Activated naive CD8-positive, alpha-beta T cell treated with anti-CD3 and anti-CD28 coated beads, Interleukin-2, amount 10 ng/mL, durations not matched to agents 7 days and 5 days (primary cell): ENCODE measurements at regions of chr5 and their contacts with region 1.

Region 1: GRCh38 chr5:134176511-134177368 is at the start of gene SKP1:
- DNase-seq: peak; percentile 94
- ATAC-seq: peak; percentile 81
- H3K4me3 Mint-ChIP-seq: peak within 1 kb of the TSS; percentile 98
- H3K27ac Mint-ChIP-seq: peak within 1 kb of the TSS; percentile 94
- H3K4me1 Mint-ChIP-seq: peaks cover 15% of the 10 kb centered on the region
- H3K27me3 Mint-ChIP-seq: no peaks in the 10 kb centered on the region
- total RNA-seq, gene SKP1: 193 to 206 TPM

Region 2: GRCh38 chr5:134004592-134005375 is 172.0 kb before region 1 on chr5 and contains the start of gene VDAC1:
- POLR2A ChIA-PET with region 1: interaction called, 10 read pairs
- DNase-seq: peak; percentile 89
- ATAC-seq: peak; percentile 84
- H3K4me3 Mint-ChIP-seq: peak within 1 kb of the TSS; percentile 95
- H3K27ac Mint-ChIP-seq: peak within 1 kb of the TSS; percentile 95
- H3K4me1 Mint-ChIP-seq: peaks cover 33% of the 10 kb centered on the region
- H3K27me3 Mint-ChIP-seq: no peaks in the 10 kb centered on the region
- total RNA-seq, gene VDAC1: 194 to 199 TPM

Region 3: DNA sequence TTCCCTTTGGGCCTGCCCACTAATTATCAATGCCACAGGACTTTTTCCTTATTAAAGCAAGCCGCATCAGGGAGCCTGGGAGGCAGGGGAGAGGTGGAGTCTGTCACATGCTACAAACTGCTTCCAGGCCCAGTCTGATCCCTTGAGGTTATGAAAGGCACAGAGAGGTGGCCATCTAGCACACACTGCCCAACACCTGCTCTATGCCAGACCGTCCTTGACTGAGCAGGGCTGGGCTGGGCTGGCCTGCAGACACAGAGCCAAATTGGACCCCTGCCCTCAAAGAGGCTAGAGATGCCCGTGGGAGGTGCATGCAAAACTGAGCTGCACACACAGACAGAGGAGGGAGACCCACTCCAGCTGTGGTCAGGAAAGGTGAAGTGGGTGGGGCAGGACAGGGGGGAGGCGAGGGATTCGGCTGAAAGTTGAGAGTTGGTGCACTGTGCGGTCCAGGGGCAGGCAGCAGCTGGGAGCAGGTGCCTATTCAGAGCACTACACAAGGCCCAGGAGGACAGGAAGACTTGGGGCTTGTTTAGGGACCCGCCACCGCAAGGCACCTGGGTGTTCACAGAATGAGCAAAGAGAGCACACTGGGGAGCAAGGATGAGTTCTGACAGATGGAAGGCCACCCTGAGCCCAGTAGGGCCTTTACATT is 98.7 kb before region 1 on chr5:
- POLR2A ChIA-PET with region 1: no interaction called
- DNase-seq: peak; percentile 49
- ATAC-seq: peak; percentile 39
- H3K4me3 Mint-ChIP-seq: peak overlapping the region; percentile 66
- H3K27ac Mint-ChIP-seq: peak overlapping the region; percentile 93
- H3K4me1 Mint-ChIP-seq: peaks cover 46% of the 10 kb centered on the region
- H3K27me3 Mint-ChIP-seq: no peaks in the 10 kb centered on the region

Region 4: GRCh38 chr5:134125039-134126015 is 51.4 kb before region 1 on chr5:
- POLR2A ChIA-PET with region 1: interaction called, 12 read pairs
- DNase-seq: peak; percentile 43
- ATAC-seq: no peak
- H3K4me3 Mint-ChIP-seq: peak overlapping the region; percentile 46
- H3K27ac Mint-ChIP-seq: peak overlapping the region; percentile 74
- H3K4me1 Mint-ChIP-seq: peaks cover 84% of the 10 kb centered on the region
- H3K27me3 Mint-ChIP-seq: no peaks in the 10 kb centered on the region

Region 5: GRCh38 chr5:134146652-134147518 is 29.9 kb before region 1 on chr5:
- POLR2A ChIA-PET with region 1: interaction called, 33 read pairs
- DNase-seq: no peak
- ATAC-seq: no peak
- H3K4me3 Mint-ChIP-seq: no peak overlapping the region
- H3K27ac Mint-ChIP-seq: peak overlapping the region; percentile 45
- H3K4me1 Mint-ChIP-seq: peaks cover 29% of the 10 kb centered on the region
- H3K27me3 Mint-ChIP-seq: no peaks in the 10 kb centered on the region

Region 6: DNA sequence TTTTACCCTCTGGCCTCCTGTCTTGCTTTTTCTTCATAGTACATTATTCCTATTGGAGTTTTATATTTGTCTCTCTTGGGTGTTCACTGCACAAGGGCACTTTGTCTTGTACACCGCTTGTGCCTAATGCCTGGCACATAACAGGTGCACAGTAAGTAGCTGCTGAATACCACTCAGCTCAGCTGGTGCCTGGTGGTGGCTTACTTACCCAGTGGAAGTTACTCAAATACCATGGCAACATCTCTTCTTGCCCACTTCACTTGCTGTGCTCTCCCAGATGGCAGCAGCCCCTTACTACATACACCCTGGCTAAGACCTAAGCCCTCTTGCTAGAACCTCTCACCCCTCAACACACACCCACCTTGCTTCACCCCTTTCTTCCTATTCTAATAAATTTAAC is 11.4 kb after region 1 on chr5:
- POLR2A ChIA-PET with region 1: interaction called, 18 read pairs
- DNase-seq: no peak
- ATAC-seq: no peak
- H3K4me3 Mint-ChIP-seq: no peak overlapping the region
- H3K27ac Mint-ChIP-seq: no peak overlapping the region
- H3K4me1 Mint-ChIP-seq: no peaks in the 10 kb centered on the region
- H3K27me3 Mint-ChIP-seq: no peaks in the 10 kb centered on the region

Region 7: DNA sequence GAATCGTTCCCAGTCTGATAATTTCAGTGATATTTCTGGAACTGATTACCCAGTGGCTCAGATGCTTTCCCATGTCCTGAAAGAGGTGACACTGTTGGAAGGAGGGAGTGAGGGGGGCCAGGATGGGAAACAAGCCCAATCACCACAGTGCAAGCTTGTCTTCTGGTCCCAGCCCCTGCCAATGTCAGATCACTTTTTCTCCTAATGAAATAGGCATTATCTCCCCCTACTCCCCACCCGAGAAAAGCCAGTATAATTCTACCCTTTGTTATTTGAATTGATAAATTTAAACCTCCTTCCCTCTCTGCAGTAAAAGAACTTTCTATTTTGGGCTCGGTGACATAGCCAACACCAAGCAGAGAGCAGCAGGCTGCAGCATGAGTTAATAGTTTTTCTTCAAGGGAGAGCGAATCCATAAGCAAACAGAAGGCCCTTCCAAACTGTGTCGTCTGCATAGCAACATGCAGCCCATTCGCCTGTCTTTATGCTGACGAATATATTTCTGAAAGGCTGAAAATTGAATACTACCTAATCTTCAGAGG is 63.8 kb after region 1 on chr5:
- POLR2A ChIA-PET with region 1: no interaction called
- DNase-seq: no peak
- ATAC-seq: no peak
- H3K4me3 Mint-ChIP-seq: no peak overlapping the region
- H3K27ac Mint-ChIP-seq: no peak overlapping the region
- H3K4me1 Mint-ChIP-seq: no peaks in the 10 kb centered on the region
- H3K27me3 Mint-ChIP-seq: peaks cover 18% of the 10 kb centered on the region

Region 8: GRCh38 chr5:134370871-134371833 is 194.4 kb after region 1 on chr5 and contains the start of gene UBE2B:
- POLR2A ChIA-PET with region 1: interaction called, 10 read pairs
- DNase-seq: peak; percentile 97
- ATAC-seq: peak; percentile 75
- H3K4me3 Mint-ChIP-seq: peak within 1 kb of the TSS; percentile 91
- H3K27ac Mint-ChIP-seq: peak within 1 kb of the TSS; percentile 99
- H3K4me1 Mint-ChIP-seq: peaks cover 34% of the 10 kb centered on the region
- H3K27me3 Mint-ChIP-seq: no peaks in the 10 kb centered on the region
- total RNA-seq, gene UBE2B: 98.5 to 101 TPM